GM23248 (cell line): ENCODE measurements at regions of chr15 and their contacts with region 1.

Region 1: GRCh38 chr15:45166834-45167630 is 20.7 kb downstream of the SHF start:
- DNase-seq: peak; percentile 93
- H3K4me3 ChIP-seq: peak overlapping the region; percentile 82
- H3K27ac ChIP-seq: peak overlapping the region; percentile 84
- H3K4me1 ChIP-seq: peaks cover 12% of the 10 kb centered on the region
- H3K27me3 ChIP-seq: no peaks in the 10 kb centered on the region

Region 2: DNA sequence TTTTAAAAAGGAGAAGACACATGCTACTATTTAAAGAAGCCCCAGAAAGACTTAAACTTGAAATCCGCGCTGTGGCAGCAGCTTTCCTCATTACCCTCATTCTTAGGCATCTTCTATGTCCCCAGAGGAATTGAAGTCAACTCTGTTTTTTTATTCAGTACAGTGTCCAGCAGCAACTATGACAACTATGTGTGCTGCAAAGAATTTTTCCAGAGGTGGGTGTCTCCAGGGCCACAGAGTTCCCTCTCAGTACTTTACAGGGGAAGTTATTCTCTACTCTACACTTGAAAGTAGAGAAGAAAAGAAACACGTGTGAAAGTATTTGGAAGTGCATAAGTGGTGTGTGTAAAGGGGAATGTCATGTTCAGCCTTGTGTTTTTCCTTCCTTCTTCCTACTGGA is 179.3 kb after region 1 on chr15:
- in situ Hi-C with region 1: no loop called
- DNase-seq: no peak
- H3K4me3 ChIP-seq: no peak overlapping the region
- H3K27ac ChIP-seq: no peak overlapping the region
- H3K4me1 ChIP-seq: no peaks in the 10 kb centered on the region
- H3K27me3 ChIP-seq: peaks cover 16% of the 10 kb centered on the region

Region 3: DNA sequence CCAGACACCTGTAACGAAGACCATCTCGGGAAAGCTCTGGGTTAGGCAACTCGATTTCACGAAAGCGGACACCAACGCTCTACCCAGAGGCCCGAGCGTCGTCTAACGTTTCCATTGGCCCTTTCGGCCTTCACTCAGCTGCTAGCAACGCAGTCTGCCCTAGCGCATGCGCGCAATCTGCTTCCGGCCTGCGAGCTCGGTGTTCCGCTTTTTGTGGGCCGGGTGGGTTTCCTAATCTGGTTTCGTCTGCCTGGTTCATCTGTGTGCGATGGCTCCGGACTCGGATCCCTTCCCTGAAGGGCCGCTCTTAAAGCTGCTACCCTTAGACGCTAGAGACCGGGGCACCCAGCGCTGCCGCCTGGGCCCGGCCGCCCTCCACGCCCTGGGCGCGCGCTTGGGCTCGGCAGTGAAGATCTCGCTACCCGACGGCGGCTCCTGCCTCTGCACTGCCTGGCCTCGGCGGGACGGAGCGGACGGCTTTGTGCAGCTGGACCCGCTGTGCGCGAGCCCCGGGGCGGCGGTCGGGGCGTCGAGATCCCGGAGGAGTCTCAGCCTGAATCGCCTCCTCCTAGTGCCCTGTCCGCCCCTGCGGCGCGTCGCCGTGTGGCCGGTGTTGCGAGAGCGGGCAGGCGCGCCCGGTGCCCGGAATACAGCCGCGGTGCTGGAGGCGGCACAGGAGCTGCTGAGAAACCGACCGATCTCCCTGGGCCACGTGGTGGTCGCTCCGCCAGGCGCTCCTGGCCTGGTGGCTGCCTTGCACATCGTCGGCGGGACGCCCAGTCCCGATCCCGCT is 235.3 kb after region 1 on chr15:
- in situ Hi-C with region 1: loop called (anchors 10 kb)
- DNase-seq: peak; percentile 99
- H3K4me3 ChIP-seq: peak overlapping the region; percentile 94
- H3K27ac ChIP-seq: peak overlapping the region; percentile 75
- H3K4me1 ChIP-seq: peaks cover 9% of the 10 kb centered on the region
- H3K27me3 ChIP-seq: no peaks in the 10 kb centered on the region